ENCODE measurements at regions of chr1 and their contacts with region 1.

Region 1: GRCh38 chr1:99808391-99809115 is 41.6 kb upstream of the AGL start:
- DNase-seq: peak; percentile 69
- H3K4me3 ChIP-seq: peak overlapping the region in 3 of 4 donors; percentile 8 to 18 (median 16)
- H3K27ac ChIP-seq: peak overlapping the region; percentile 69 to 85 (median 82)
- H3K4me1 ChIP-seq: peaks cover 0 to 13% (median 6%) of the 10 kb centered on the region in 4 donors
- H3K27me3 ChIP-seq: no peaks in the 10 kb centered on the region
- CTCF ChIP-seq: peak; percentile 32 to 76 (median 61)
- EP300 ChIP-seq: peak in 1 of 4 donors; percentile 65
- POLR2A ChIP-seq: peak in 1 of 2 donors; percentile 30

Region 2: DNA sequence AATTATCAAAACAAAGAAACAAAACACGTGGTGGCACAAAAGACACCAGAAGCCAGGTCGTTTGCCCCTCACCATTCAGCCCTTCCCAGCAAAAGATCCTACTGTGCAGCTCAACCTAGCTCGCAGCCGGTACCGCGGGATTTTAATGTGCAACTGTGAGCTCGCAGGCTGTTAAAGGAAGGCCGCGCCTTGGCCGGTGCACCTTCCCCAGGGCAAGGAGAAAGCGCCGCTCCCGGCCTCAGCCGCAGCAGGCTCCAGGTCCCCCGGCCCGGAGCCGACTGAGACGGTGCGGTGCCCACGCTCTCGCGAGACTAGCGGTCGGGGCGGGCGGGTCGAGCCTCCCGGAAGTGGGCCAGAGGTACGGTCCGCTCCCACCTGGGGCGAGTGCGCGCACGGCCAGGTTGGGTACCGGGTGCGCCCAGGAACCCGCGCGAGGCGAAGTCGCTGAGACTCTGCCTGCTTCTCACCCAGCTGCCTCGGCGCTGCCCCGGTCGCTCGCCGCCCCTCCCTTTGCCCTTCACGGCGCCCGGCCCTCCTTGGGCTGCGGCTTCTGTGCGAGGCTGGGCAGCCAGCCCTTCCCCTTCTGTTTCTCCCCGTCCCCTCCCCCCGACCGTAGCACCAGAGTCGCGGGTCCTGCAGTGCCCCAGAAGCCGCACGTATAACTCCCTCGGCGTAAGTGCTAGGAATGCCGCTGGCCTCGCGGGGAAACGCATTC is 41.3 kb after region 1 on chr1 and contains the start of gene AGL:
- intact Hi-C with region 1: loop called (anchors 1 kb)
- DNase-seq: peak; percentile 93
- H3K4me3 ChIP-seq: peak within 1 kb of the TSS; percentile 74 to 90 (median 84)
- H3K27ac ChIP-seq: peak within 1 kb of the TSS; percentile 91 to 93 (median 92)
- H3K4me1 ChIP-seq: peaks cover 0 to 33% (median 8%) of the 10 kb centered on the region in 4 donors
- H3K27me3 ChIP-seq: no peaks in the 10 kb centered on the region
- CTCF ChIP-seq: no peak
- EP300 ChIP-seq: no peak
- POLR2A ChIP-seq: peak; percentile 57 to 78
- total RNA-seq, gene AGL: 28.3 to 34.3 (median 32.5) TPM

Region 3: DNA sequence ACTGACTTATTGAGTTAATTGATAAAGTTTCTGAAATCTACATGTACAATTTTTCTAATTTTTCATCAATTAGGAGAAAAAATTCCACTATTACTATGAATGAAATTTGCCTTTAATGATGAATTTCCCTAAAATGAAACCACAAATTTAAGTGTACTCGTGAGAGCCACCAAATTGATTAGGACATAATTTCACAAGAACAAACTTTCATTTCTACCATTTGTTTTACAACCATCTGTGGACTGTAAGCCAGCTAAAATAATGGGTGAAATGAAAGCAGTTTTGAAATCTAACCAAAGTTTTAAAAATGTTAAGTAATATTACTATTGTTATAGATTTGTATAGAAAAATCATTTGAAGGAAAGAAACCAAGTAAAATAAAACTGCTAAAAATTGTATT is 83.4 kb after region 1 on chr1:
- intact Hi-C with region 1: no loop called
- DNase-seq: no peak
- H3K4me3 ChIP-seq: no peak overlapping the region
- H3K27ac ChIP-seq: no peak overlapping the region
- H3K4me1 ChIP-seq: no peaks in the 10 kb centered on the region
- H3K27me3 ChIP-seq: no peaks in the 10 kb centered on the region
- CTCF ChIP-seq: no peak
- EP300 ChIP-seq: no peak
- POLR2A ChIP-seq: no peak

Region 4: DNA sequence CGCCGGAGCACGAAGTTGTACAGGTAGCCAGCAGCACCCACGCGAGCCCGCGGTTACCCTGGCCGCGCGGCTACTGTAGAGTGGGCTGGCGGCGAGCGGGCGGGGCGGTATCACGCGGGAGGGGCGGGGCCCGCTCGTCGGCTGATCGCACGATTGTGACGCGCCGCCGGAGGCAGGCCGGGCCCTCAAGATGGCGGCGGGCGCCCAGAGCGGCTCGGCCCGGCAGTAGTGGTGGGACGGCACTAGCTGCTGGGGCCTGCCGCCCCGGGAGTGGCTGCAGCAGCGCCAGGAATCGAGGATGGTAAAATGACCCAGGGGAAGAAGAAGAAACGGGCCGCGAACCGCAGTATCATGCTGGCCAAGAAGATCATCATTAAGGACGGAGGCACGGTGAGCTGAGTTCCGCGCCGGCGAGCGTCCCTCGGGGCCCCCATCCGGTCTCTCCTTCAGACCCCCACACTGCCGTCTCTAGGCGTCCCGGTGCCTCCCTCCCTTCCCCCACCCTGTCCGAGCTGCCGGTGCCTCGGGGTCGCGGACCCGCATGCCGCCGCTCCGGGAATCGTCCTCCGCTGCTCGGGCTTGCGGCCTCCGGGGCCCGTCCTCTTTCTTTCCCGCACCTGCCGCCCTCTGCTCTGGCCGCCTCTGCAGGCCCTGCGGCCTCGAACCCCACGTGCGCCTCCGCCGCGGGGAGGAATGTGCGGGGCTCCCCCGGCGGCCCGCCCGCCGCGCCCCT is 229.5 kb after region 1 on chr1:
- intact Hi-C with region 1: loop called (anchors 5 kb)
- DNase-seq: peak; percentile 94
- H3K4me3 ChIP-seq: peak overlapping the region; percentile 76 to 91 (median 82)
- H3K27ac ChIP-seq: peak overlapping the region; percentile 96 to 99 (median 98)
- H3K4me1 ChIP-seq: peaks cover 0 to 44% (median 43%) of the 10 kb centered on the region in 4 donors
- H3K27me3 ChIP-seq: no peaks in the 10 kb centered on the region
- CTCF ChIP-seq: no peak
- EP300 ChIP-seq: peak in 1 of 4 donors; percentile 4
- POLR2A ChIP-seq: peak; percentile 87 to 90

Region 5: DNA sequence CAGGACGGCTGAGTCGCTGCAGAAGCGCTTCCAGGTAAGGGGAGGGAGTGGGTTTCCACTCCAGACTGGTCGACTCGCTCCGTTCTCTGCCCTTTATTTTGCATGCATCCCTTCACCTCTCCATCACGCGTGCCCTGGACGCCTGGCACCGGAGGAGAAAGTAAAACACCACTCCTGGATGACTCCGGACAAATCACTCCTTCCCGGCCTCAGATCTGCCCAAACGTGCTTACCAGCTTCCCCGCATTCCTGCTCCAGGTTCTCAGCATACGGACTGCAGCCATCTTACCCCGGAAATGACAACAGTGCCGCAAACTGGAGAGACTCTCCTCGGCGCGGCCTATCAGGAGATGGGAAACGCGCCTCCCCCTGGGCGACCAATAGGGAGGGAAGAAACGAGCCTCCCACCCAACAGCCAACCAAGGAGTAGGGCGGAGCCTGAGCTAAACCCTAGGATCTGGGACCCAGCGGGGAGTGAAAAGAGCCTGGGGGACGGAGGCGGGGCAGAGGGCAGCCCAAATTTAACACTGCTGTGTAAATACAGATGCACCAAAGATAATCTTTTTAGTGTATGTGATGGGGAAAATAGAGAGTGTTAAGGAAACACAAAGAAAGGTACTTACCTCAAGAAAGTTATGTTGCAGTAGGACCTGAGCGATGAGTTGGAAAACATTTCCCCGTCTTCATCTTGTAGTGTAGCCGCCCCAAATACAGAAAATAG is 441.1 kb after region 1 on chr1 and contains the start of gene DBT:
- intact Hi-C with region 1: loop called (anchors 5 kb)
- DNase-seq: peak; percentile 99
- H3K4me3 ChIP-seq: peak within 1 kb of the TSS; percentile 81 to 91 (median 88)
- H3K27ac ChIP-seq: peak within 1 kb of the TSS; percentile 87 to 94 (median 93)
- H3K4me1 ChIP-seq: peaks cover 0 to 16% (median 8%) of the 10 kb centered on the region in 4 donors
- H3K27me3 ChIP-seq: no peaks in the 10 kb centered on the region
- CTCF ChIP-seq: no peak
- EP300 ChIP-seq: no peak
- POLR2A ChIP-seq: peak; percentile 80 to 84
- total RNA-seq, gene DBT: 8.8 to 14.3 (median 11.1) TPM

Region 6: GRCh38 chr1:100459358-100460114 is 651.0 kb after region 1 on chr1:
- intact Hi-C with region 1: loop called (anchors 1 kb)
- DNase-seq: peak; percentile 86
- H3K4me3 ChIP-seq: no peak overlapping the region
- H3K27ac ChIP-seq: peak overlapping the region; percentile 18 to 73 (median 60)
- H3K4me1 ChIP-seq: peaks cover 0 to 13% (median 8%) of the 10 kb centered on the region in 4 donors
- H3K27me3 ChIP-seq: no peaks in the 10 kb centered on the region
- CTCF ChIP-seq: peak; percentile 84 to 87 (median 86)
- EP300 ChIP-seq: no peak
- POLR2A ChIP-seq: no peak

Region 7: GRCh38 chr1:100866041-100866900 is 1057.7 kb after region 1 on chr1:
- intact Hi-C with region 1: loop called (anchors 2 kb)
- DNase-seq: no peak
- H3K4me3 ChIP-seq: no peak overlapping the region
- H3K27ac ChIP-seq: no peak overlapping the region
- H3K4me1 ChIP-seq: peaks cover 0 to 8% (median 6%) of the 10 kb centered on the region in 4 donors
- H3K27me3 ChIP-seq: no peaks in the 10 kb centered on the region
- CTCF ChIP-seq: peak in 3 of 4 experiments; percentile 32 to 54 (median 41)
- EP300 ChIP-seq: no peak
- POLR2A ChIP-seq: no peak